CD8-positive, alpha-beta T cell (primary cell): ENCODE measurements at regions of chr19 and their contacts with region 1.

Region 1: GRCh38 chr19:36665832-36666231 is 805 bp downstream of the ZNF461 start:
- DNase-seq: peak in 1 of 9 experiments; percentile 8
- ATAC-seq: no peak
- H3K4me3 ChIP-seq: peak overlapping the region; percentile 62 to 63
- H3K4me3 Mint-ChIP-seq: peak overlapping the region; percentile 98
- H3K27ac ChIP-seq: peak overlapping the region; percentile 59 to 72
- H3K27ac Mint-ChIP-seq: peak overlapping the region; percentile 73
- H3K4me1 ChIP-seq: peaks cover 8% of the 10 kb centered on the region
- H3K4me1 Mint-ChIP-seq: peaks cover 35% of the 10 kb centered on the region
- H3K27me3 ChIP-seq: no peaks in the 10 kb centered on the region
- H3K27me3 Mint-ChIP-seq: no peaks in the 10 kb centered on the region
- CTCF ChIP-seq: no peak

Region 2: GRCh38 chr19:36528194-36528920 is 137.5 kb before region 1 on chr19 and contains the start of gene ZNF260:
- CTCF ChIA-PET with region 1: no interaction called
- POLR2A ChIA-PET with region 1: no interaction called
- intact Hi-C with region 1: loop called in 1 of 2 experiments (anchors 1 kb)
- DNase-seq: peak; percentile 77 to 96 (median 92)
- ATAC-seq: peak; percentile 90
- H3K4me3 ChIP-seq: peak within 1 kb of the TSS; percentile 64 to 85
- H3K4me3 Mint-ChIP-seq: peak within 1 kb of the TSS; percentile 99
- H3K27ac ChIP-seq: peak within 1 kb of the TSS; percentile 52 to 84
- H3K27ac Mint-ChIP-seq: peak within 1 kb of the TSS; percentile 96
- H3K4me1 ChIP-seq: peaks cover 21% of the 10 kb centered on the region
- H3K4me1 Mint-ChIP-seq: peaks cover 28% of the 10 kb centered on the region
- H3K27me3 ChIP-seq: no peaks in the 10 kb centered on the region
- H3K27me3 Mint-ChIP-seq: no peaks in the 10 kb centered on the region
- CTCF ChIP-seq: no peak
- total RNA-seq, gene ZNF260: 2.8 to 4.6 TPM

Region 3: GRCh38 chr19:36605101-36605876 is 60.5 kb before region 1 on chr19 and contains the start of gene ZNF382:
- CTCF ChIA-PET with region 1: no interaction called
- POLR2A ChIA-PET with region 1: interaction called, 4 read pairs
- intact Hi-C with region 1: loop called (anchors 2 to 5 kb)
- DNase-seq: peak; percentile 72 to 91 (median 86)
- ATAC-seq: peak; percentile 65
- H3K4me3 ChIP-seq: peak within 1 kb of the TSS; percentile 89 to 95
- H3K4me3 Mint-ChIP-seq: peak within 1 kb of the TSS; percentile 91
- H3K27ac ChIP-seq: peak within 1 kb of the TSS; percentile 89 to 98
- H3K27ac Mint-ChIP-seq: peak within 1 kb of the TSS; percentile 97
- H3K4me1 ChIP-seq: peaks cover 11% of the 10 kb centered on the region
- H3K4me1 Mint-ChIP-seq: peaks cover 29% of the 10 kb centered on the region
- H3K27me3 ChIP-seq: no peaks in the 10 kb centered on the region
- H3K27me3 Mint-ChIP-seq: no peaks in the 10 kb centered on the region
- CTCF ChIP-seq: no peak
- total RNA-seq, gene ZNF382: 4.6 to 4.7 TPM

Region 4: GRCh38 chr19:36679455-36679854 is 13.6 kb after region 1 on chr19:
- CTCF ChIA-PET with region 1: no interaction called
- POLR2A ChIA-PET with region 1: no interaction called
- intact Hi-C with region 1: no loop called
- DNase-seq: no peak
- ATAC-seq: no peak
- H3K4me3 ChIP-seq: no peak overlapping the region
- H3K4me3 Mint-ChIP-seq: no peak overlapping the region
- H3K27ac ChIP-seq: no peak overlapping the region
- H3K27ac Mint-ChIP-seq: no peak overlapping the region
- H3K4me1 ChIP-seq: no peaks in the 10 kb centered on the region
- H3K4me1 Mint-ChIP-seq: no peaks in the 10 kb centered on the region
- H3K27me3 ChIP-seq: no peaks in the 10 kb centered on the region
- H3K27me3 Mint-ChIP-seq: no peaks in the 10 kb centered on the region
- CTCF ChIP-seq: no peak

Region 5: DNA sequence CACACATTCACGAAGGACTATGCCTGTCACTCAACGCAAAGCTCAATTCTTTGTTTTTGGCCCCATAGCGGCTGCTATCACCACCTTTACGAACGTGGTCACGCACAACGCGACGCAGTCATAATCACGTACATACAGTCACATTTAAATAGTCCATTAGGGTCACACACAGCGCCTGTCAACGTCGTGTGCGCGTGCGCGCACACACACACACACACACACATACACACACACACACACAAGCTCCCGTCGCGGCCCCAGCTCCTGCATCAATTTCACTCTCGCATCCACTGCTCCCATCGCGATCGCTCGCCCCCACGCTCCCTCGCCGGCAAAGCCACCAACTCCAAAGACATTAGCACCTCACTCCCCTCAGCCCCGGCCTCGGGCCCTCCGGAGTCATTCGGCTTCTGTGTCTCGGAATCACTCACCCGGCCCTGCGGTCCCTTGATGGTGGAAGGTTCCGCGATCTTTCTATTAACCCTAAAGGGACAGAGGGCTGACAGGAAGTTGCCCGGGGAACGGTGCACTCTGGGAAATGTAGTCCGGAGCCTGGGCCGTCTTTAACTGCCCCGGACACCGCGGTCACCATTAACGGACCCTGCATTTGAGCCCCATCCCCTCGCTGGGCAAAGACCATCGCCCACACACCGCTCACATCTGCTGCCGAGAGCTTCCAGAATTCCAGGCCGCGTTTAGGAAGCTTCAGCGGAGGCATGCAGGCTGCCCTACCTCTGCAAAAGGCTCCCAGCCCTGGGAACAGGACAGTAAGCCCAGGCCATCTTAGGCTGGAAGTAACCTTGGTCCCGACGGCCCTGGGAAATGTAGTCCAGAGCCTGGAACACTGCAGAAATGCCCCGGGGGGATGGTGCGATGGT is 172.3 kb after region 1 on chr19 and contains the start of gene ZNF790:
- CTCF ChIA-PET with region 1: no interaction called
- POLR2A ChIA-PET with region 1: interaction called, 4 read pairs
- intact Hi-C with region 1: loop called in 1 of 2 experiments (anchors 5 kb)
- DNase-seq: peak; percentile 62 to 92 (median 81)
- ATAC-seq: peak; percentile 87
- H3K4me3 ChIP-seq: peak within 1 kb of the TSS; percentile 86 to 91
- H3K4me3 Mint-ChIP-seq: no peak within 1 kb of the TSS
- H3K27ac ChIP-seq: peak within 1 kb of the TSS; percentile 88 to 97
- H3K27ac Mint-ChIP-seq: no peak within 1 kb of the TSS
- H3K4me1 ChIP-seq: peaks cover 17% of the 10 kb centered on the region
- H3K4me1 Mint-ChIP-seq: peaks cover 21% of the 10 kb centered on the region
- H3K27me3 ChIP-seq: no peaks in the 10 kb centered on the region
- H3K27me3 Mint-ChIP-seq: no peaks in the 10 kb centered on the region
- CTCF ChIP-seq: no peak
- total RNA-seq, gene ZNF790: 2.1 to 3.6 TPM

Region 6: GRCh38 chr19:37007587-37008220 is 341.9 kb after region 1 on chr19:
- CTCF ChIA-PET with region 1: no interaction called
- POLR2A ChIA-PET with region 1: no interaction called
- intact Hi-C with region 1: no loop called
- DNase-seq: peak in 7 of 9 experiments; percentile 6 to 53 (median 21)
- ATAC-seq: no peak
- H3K4me3 ChIP-seq: peak overlapping the region in 1 of 2 experiments; percentile 33
- H3K4me3 Mint-ChIP-seq: peak overlapping the region; percentile 75
- H3K27ac ChIP-seq: no peak overlapping the region
- H3K27ac Mint-ChIP-seq: no peak overlapping the region
- H3K4me1 ChIP-seq: no peaks in the 10 kb centered on the region
- H3K4me1 Mint-ChIP-seq: peaks cover 3% of the 10 kb centered on the region
- H3K27me3 ChIP-seq: no peaks in the 10 kb centered on the region
- H3K27me3 Mint-ChIP-seq: peaks cover 2% of the 10 kb centered on the region
- CTCF ChIP-seq: no peak